SK-N-SH (cell line): ENCODE measurements at regions of chr6 and their contacts with region 1.

Region 1: DNA sequence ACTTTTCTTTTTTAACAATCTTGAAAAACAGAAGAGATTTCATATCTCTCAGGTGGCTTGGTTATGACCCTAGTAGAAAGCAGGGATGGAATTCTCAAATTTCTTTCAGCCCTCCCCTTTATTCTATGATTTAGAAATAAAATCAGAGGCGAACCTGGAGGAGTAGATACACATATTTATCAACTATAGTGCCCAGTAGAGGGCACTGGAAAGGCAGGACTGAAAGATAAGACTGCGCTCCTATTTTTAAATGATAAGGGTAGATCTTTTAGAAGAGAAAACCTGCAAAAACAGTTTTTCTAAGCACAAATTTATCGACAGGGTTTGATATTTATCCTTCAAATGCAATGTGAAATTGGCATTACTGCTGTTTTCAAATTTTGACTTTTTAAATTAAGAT is 1296.6 kb downstream of the EPHA7 start:
- DNase-seq: peak; percentile 11
- H3K4me3 ChIP-seq: no peak overlapping the region
- H3K27ac ChIP-seq: no peak overlapping the region
- H3K4me1 ChIP-seq: no peaks in the 10 kb centered on the region; a peak in 1 of 4 replicates
- H3K27me3 ChIP-seq: no peaks in the 10 kb centered on the region
- CTCF ChIP-seq: peak; percentile 34
- EP300 ChIP-seq: no peak
- RAD21 ChIP-seq: peak; percentile 76

Region 2: DNA sequence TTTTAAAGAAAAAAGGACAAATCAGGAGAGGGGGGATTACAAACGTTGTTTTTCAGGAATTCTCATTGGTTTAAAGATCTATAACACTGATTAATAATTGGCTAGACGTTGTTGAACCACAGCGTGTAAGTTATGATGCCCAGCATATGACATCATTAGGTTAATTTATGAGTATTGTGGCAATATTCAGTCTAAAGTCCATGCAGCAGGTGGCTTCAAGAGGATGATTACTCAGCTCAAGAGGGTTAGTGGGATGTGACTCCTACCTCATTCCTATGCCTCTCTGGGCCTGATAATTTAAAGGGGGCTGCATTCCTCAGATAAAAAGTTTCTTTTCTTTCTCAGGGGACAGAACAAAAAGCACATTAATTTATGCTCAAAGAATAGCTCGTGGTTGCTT is 12.3 kb before region 1 on chr6:
- CTCF ChIA-PET with region 1: interaction called, 10 read pairs
- POLR2A ChIA-PET with region 1: no interaction called
- DNase-seq: no peak
- H3K4me3 ChIP-seq: no peak overlapping the region
- H3K27ac ChIP-seq: no peak overlapping the region
- H3K4me1 ChIP-seq: no peaks in the 10 kb centered on the region
- H3K27me3 ChIP-seq: no peaks in the 10 kb centered on the region
- CTCF ChIP-seq: no peak
- EP300 ChIP-seq: no peak
- RAD21 ChIP-seq: no peak